Gastrocnemius medialis (tissue), 4 donors: ENCODE measurements at regions of chr12 and their contacts with region 1.

Region 1: DNA sequence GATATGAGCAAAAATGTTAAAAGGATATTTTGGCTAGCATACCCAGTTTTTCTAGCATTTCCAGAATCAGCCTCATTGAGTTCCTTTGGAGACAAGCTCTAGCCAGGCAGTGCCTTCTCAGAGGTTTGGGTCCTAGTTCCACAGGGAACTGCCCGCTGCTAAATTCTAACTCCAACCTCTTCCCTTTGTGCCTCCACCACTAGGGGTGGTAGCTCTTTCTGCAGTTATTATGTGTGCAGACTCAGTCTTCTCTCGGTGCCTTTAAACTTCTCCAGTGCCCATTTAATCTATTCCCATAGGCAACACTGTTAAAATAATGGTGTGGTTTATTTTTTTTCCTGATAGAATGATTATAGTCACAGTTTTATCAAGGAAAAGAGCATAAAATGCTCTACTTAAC is 21.5 kb upstream of the SLC25A3 start:
- DNase-seq: no peak
- ATAC-seq: no peak
- H3K4me3 ChIP-seq: no peak overlapping the region
- H3K27ac ChIP-seq: no peak overlapping the region
- H3K4me1 ChIP-seq: peaks cover 0 to 4% of the 10 kb centered on the region in 2 donors
- H3K27me3 ChIP-seq: no peaks in the 10 kb centered on the region
- CTCF ChIP-seq: no peak
- POLR2A ChIP-seq: no peak

Region 2: DNA sequence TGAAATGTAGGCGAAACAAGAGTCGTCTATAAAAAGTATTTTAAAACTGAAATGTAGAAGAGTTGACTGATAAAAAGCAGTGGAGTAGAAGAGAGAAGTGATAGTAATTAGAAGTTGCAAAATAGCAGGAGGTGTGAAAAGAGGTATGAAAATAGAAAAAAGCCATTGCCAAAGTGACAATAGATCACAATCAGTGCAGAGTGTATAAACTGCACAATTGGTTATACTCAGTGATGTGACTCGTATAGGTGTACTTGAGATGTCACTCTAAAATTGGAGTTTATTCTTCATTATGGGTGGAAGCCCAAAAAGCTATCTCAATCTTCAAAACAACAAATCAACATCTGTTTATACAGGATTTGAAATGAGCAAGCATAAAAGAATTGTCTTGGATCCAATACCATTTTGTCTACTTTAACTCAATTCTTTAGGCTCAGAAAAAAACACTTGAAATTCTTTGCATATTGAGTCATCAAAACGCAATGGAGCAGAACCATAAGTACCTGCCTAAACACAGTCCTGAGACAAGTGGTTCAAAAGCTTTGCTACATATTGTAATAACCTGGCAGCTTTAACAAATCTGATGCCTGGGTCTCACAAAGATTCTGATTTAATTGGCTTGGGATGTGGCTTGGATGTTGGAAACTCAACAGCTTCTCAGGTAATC is 63.8 kb after region 1 on chr12:
- in situ Hi-C with region 1: no loop called
- intact Hi-C with region 1: no loop called
- DNase-seq: no peak
- ATAC-seq: no peak
- H3K4me3 ChIP-seq: no peak overlapping the region
- H3K27ac ChIP-seq: no peak overlapping the region
- H3K4me1 ChIP-seq: no peaks in the 10 kb centered on the region
- H3K27me3 ChIP-seq: no peaks in the 10 kb centered on the region
- CTCF ChIP-seq: no peak
- POLR2A ChIP-seq: no peak

Region 3: DNA sequence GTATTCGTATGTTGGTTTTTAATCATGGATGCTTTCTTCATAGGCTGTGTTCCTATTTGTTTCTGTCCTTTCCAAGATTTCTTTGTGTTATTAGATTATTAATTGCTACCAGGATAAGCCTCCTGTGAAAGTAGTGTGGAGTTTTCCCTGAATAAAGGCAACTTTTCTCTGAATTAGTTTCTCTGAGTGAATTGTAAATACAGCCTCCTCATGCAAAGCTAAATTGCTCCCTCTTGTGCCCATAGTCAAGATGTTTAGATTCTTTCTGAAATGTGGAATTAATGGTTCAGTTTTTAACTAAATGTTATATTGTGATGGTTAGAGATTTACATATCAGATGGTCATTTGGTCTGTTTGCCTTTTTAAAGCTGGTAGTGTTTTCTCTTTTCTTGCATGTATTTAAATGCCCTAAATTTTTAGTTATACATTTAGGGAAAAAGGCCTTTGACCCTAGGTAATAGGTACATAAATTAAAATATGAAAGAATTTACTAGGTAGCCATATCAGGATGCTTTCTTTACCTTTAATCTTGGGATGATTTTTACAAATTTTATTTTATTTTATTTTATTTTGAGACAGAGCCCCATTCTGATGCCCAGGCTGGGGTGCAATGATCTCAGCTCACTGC is 82.0 kb after region 1 on chr12:
- in situ Hi-C with region 1: loop called in 3 of 4 experiments (anchors 5 to 25 kb)
- intact Hi-C with region 1: loop called (anchors 1 kb)
- DNase-seq: no peak
- ATAC-seq: peak; percentile 45 to 64
- H3K4me3 ChIP-seq: no peak overlapping the region
- H3K27ac ChIP-seq: no peak overlapping the region
- H3K4me1 ChIP-seq: no peaks in the 10 kb centered on the region
- H3K27me3 ChIP-seq: no peaks in the 10 kb centered on the region
- CTCF ChIP-seq: peak in 4 of 5 experiments; percentile 33 to 60 (median 46)
- POLR2A ChIP-seq: no peak

Region 4: DNA sequence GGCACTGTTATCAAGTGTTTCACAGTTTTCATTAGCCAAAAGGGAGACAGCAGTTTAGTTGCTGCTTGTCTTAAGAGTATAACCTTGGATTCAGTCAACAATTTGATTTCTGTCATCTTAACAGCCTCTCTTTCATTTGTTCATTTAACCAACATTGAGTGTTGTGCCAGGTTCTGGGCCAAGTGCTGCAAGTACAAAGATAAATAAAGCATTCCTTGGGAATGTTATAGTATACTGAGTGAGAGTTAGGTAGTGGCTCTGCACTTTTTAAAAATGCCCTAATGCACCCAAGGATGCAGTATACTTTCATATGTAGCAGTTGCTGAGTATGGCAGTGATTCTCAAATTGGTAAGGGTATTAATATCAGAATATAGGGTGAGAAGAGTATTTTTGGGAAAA is 88.5 kb after region 1 on chr12:
- in situ Hi-C with region 1: loop called in 3 of 4 experiments (anchors 5 to 25 kb)
- intact Hi-C with region 1: no loop called
- DNase-seq: no peak
- ATAC-seq: no peak
- H3K4me3 ChIP-seq: no peak overlapping the region
- H3K27ac ChIP-seq: no peak overlapping the region
- H3K4me1 ChIP-seq: no peaks in the 10 kb centered on the region
- H3K27me3 ChIP-seq: no peaks in the 10 kb centered on the region
- CTCF ChIP-seq: no peak
- POLR2A ChIP-seq: no peak

Region 5: GRCh38 chr12:98803468-98804209 is 231.6 kb after region 1 on chr12:
- in situ Hi-C with region 1: no loop called
- intact Hi-C with region 1: no loop called
- DNase-seq: no peak
- ATAC-seq: no peak
- H3K4me3 ChIP-seq: no peak overlapping the region
- H3K27ac ChIP-seq: no peak overlapping the region
- H3K4me1 ChIP-seq: no peaks in the 10 kb centered on the region
- H3K27me3 ChIP-seq: no peaks in the 10 kb centered on the region
- CTCF ChIP-seq: no peak
- POLR2A ChIP-seq: no peak